Prostate gland (tissue), 2 donors: ENCODE measurements at regions of chr9 and their contacts with region 1.

Region 1: GRCh38 chr9:75866273-75866871 is 24.1 kb upstream of the PCSK5 start:
- DNase-seq: peak; percentile 35
- H3K4me3 ChIP-seq: no peak overlapping the region
- H3K27ac ChIP-seq: no peak overlapping the region
- H3K4me1 ChIP-seq: no peaks in the 10 kb centered on the region
- H3K27me3 ChIP-seq: no peaks in the 10 kb centered on the region
- CTCF ChIP-seq: peak; percentile 38 to 68 (median 60)
- POLR2A ChIP-seq: no peak

Region 2: DNA sequence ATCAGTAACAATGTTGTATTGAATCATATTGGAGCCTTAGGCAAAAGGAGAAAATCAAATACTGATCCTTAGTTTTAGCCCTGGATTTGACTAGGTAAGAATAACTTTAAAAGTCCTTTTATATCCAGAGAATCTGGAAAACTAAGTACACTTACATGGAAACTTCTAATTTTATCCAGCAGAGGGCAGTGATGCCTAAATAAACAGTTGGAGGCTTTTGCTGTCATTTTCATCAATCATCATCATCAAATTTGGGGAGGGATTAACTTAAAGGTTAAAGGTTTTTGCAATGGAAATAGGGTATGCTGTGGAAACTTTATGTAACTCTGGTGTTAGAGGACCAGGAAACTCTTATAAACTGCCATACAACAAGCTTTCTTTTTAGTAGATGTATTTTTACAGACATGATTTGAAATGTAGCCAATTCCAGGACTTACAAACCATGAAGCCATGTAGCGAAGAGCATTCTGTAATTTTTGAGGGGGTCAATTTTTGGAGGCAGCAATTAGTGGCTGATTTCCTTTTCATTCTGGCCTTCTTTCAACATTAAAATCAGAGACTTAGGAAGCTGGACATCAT is 665.4 kb before region 1 on chr9:
- intact Hi-C with region 1: loop called (anchors 10 kb)
- DNase-seq: peak; percentile 36
- H3K4me3 ChIP-seq: no peak overlapping the region
- H3K27ac ChIP-seq: no peak overlapping the region
- H3K4me1 ChIP-seq: no peaks in the 10 kb centered on the region
- H3K27me3 ChIP-seq: no peaks in the 10 kb centered on the region
- CTCF ChIP-seq: peak; percentile 38 to 84 (median 76)
- POLR2A ChIP-seq: no peak

Region 3: DNA sequence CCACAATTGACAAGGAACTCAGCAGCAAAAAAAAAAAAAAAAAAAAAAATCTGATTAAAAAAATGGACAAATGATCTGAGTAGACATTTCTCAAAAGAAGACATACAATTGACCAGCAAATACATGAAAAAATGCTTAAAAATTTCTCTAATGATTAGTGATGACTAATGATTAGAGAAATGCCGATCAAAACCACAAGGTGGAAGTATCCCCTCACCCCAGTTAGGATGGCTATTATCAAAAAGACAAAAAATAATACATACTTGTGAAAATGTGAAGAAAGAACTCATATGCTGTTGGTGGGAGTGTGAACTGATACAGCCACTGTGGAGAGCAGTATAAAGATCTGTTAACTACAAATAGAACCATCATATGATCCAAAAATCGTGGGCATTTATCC is 532.7 kb before region 1 on chr9:
- intact Hi-C with region 1: loop called (anchors 10 kb)
- DNase-seq: no peak
- H3K4me3 ChIP-seq: no peak overlapping the region
- H3K27ac ChIP-seq: no peak overlapping the region
- H3K4me1 ChIP-seq: no peaks in the 10 kb centered on the region
- H3K27me3 ChIP-seq: no peaks in the 10 kb centered on the region
- CTCF ChIP-seq: peak in 1 of 4 experiments; percentile 29
- POLR2A ChIP-seq: no peak

Region 4: GRCh38 chr9:75699017-75699416 is 167.4 kb before region 1 on chr9:
- intact Hi-C with region 1: no loop called
- DNase-seq: no peak
- H3K4me3 ChIP-seq: no peak overlapping the region
- H3K27ac ChIP-seq: no peak overlapping the region
- H3K4me1 ChIP-seq: no peaks in the 10 kb centered on the region
- H3K27me3 ChIP-seq: no peaks in the 10 kb centered on the region
- CTCF ChIP-seq: no peak
- POLR2A ChIP-seq: no peak

Region 5: GRCh38 chr9:75803130-75803529 is 63.2 kb before region 1 on chr9:
- intact Hi-C with region 1: no loop called
- DNase-seq: no peak
- H3K4me3 ChIP-seq: no peak overlapping the region
- H3K27ac ChIP-seq: no peak overlapping the region
- H3K4me1 ChIP-seq: no peaks in the 10 kb centered on the region
- H3K27me3 ChIP-seq: no peaks in the 10 kb centered on the region
- CTCF ChIP-seq: no peak
- POLR2A ChIP-seq: no peak